Activated T-helper 1 cell treated with anti-CD3 and anti-CD28 coated beads, Interleukin-12 subunit alpha, Interleukin-12 subunit beta, Interleukin-2, Interleukin-4 antibody, amounts not matched to agents 30 ng/mL and 10 ng/mL and 1 ng/mL, durations not matched to agents 14 hours and 24 hours and 36 hours (primary cell): ENCODE measurements at regions of chr19 and their contacts with region 1.

Region 1: GRCh38 chr19:4267101-4267900 is 11.8 kb upstream of the SHD start:
- DNase-seq: peak; percentile 40
- H3K4me3 Mint-ChIP-seq: no peak overlapping the region
- H3K27ac Mint-ChIP-seq: peak overlapping the region; percentile 9
- H3K4me1 Mint-ChIP-seq: peaks cover 17% of the 10 kb centered on the region
- H3K27me3 Mint-ChIP-seq: no peaks in the 10 kb centered on the region

Region 2: GRCh38 chr19:4288091-4288777 is 20.9 kb after region 1 on chr19:
- intact Hi-C with region 1: no loop called
- DNase-seq: no peak
- H3K4me3 Mint-ChIP-seq: no peak overlapping the region
- H3K27ac Mint-ChIP-seq: no peak overlapping the region
- H3K4me1 Mint-ChIP-seq: no peaks in the 10 kb centered on the region
- H3K27me3 Mint-ChIP-seq: no peaks in the 10 kb centered on the region

Region 3: DNA sequence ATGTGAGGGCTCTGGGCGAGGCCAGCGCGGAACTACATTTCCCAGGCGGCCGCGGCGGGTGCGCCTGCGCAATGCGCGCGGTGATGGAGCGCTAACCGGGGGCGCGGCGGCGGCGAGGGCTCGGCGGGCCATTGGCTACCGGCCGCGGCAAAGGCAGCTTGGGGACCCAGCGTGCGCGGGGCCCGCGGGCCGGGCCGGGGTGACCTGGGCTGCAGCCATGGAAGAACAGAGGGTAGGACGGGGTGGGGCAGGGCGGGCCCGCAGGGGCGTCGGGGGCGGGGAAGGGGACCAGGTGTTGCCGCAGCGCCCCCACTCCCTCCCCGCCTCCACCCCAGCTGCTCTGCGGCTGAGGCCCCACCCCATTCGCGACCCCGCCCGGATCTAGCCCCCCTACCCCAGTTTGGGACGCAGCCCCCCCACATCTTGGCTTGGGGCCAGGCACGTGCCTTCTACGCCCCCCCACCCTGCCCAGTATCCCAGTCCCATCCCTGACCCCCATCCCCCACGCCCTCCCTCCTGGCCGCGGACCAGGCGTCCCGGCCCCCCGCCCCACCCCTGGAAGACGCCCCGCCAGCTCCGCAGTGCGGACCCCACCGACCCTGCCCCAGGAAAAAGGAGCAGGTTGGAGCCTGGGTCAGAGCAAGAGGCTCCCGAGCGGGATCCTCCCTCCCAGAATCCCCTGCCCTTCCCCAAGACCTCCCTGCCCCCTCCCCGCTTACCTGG is 37.4 kb after region 1 on chr19 and contains the start of gene FSD1:
- intact Hi-C with region 1: loop called (anchors 5 kb)
- DNase-seq: peak; percentile 76
- H3K4me3 Mint-ChIP-seq: peak within 1 kb of the TSS; percentile 81
- H3K27ac Mint-ChIP-seq: peak within 1 kb of the TSS; percentile 70
- H3K4me1 Mint-ChIP-seq: peaks cover 31% of the 10 kb centered on the region
- H3K27me3 Mint-ChIP-seq: no peaks in the 10 kb centered on the region
- total RNA-seq, gene FSD1: 39.1 and 46.5 TPM in 2 replicates

Region 4: DNA sequence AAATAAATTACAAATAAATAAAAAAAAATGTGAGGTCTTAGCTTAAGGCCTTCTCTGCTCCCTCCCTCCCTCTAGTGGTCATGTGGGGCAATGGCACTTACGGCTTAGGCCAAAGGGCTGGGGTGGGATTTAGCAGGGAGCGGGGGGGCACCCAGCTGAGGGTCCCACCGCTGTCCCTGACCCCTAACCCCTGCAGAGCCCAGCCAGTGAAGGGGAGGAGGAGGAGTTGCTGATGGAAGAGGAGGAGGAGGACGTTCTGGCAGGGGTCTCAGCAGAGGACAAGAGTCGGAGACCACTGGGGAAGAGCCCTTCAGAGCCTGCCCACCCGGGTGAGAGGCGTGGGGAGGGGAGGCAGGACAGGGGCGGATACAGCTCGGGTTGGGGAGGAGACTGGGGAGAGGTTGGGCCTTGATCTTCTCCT is 85.4 kb after region 1 on chr19:
- intact Hi-C with region 1: loop called (anchors 1 kb)
- DNase-seq: no peak
- H3K4me3 Mint-ChIP-seq: no peak overlapping the region
- H3K27ac Mint-ChIP-seq: no peak overlapping the region
- H3K4me1 Mint-ChIP-seq: no peaks in the 10 kb centered on the region
- H3K27me3 Mint-ChIP-seq: no peaks in the 10 kb centered on the region

Region 5: GRCh38 chr19:4524808-4525562 is 257.7 kb after region 1 on chr19:
- intact Hi-C with region 1: loop called (anchors 5 kb)
- DNase-seq: peak; percentile 42
- H3K4me3 Mint-ChIP-seq: no peak overlapping the region
- H3K27ac Mint-ChIP-seq: no peak overlapping the region
- H3K4me1 Mint-ChIP-seq: no peaks in the 10 kb centered on the region
- H3K27me3 Mint-ChIP-seq: peaks cover 6% of the 10 kb centered on the region